ENCODE measurements at regions of chr16 and their contacts with region 1.

Region 1: GRCh38 chr16:57906382-57907316 is 64.3 kb downstream of the CNGB1 start:
- DNase-seq: peak; percentile 28
- H3K4me3 ChIP-seq: no peak overlapping the region
- H3K27ac ChIP-seq: no peak overlapping the region
- H3K4me1 ChIP-seq: no peaks in the 10 kb centered on the region
- H3K27me3 ChIP-seq: no peaks in the 10 kb centered on the region
- CTCF ChIP-seq: peak in 2 of 3 experiments; percentile 40 to 41
- POLR2A ChIP-seq: no peak

Region 2: GRCh38 chr16:57816334-57816745 is 90.3 kb before region 1 on chr16:
- intact Hi-C with region 1: no loop called
- DNase-seq: peak; percentile 72
- H3K4me3 ChIP-seq: no peak overlapping the region
- H3K27ac ChIP-seq: peak overlapping the region in 1 of 2 donors; percentile 29
- H3K4me1 ChIP-seq: peaks cover 3% of the 10 kb centered on the region
- H3K27me3 ChIP-seq: no peaks in the 10 kb centered on the region
- CTCF ChIP-seq: no peak
- POLR2A ChIP-seq: no peak

Region 3: DNA sequence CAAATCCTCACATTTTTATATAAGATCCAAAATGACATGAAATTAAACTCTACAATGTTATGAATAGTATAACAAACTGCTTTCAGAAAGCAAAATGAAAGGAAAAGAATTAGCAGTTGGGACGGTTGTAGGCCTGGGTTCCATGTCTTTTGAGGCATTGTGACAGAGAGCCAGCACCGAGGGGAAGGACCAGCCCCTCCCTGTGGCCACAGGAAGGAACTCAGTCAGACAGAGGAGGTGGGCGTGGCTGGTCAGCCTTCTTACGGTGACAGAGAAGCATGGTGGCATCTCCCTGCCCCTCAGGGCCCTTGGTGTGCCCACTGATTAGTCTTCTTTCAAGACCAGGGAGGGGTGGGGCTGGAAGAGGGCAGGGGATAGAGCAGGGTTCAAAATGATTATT is 88.1 kb after region 1 on chr16:
- intact Hi-C with region 1: loop called (anchors 5 kb)
- DNase-seq: peak; percentile 73
- H3K4me3 ChIP-seq: no peak overlapping the region
- H3K27ac ChIP-seq: no peak overlapping the region
- H3K4me1 ChIP-seq: peaks cover 8% of the 10 kb centered on the region
- H3K27me3 ChIP-seq: no peaks in the 10 kb centered on the region
- CTCF ChIP-seq: peak in 2 of 3 experiments; percentile 9 to 23
- POLR2A ChIP-seq: no peak